Caco-2 (cell line): ENCODE measurements at regions of chr6 and their contacts with region 1.

Region 1: DNA sequence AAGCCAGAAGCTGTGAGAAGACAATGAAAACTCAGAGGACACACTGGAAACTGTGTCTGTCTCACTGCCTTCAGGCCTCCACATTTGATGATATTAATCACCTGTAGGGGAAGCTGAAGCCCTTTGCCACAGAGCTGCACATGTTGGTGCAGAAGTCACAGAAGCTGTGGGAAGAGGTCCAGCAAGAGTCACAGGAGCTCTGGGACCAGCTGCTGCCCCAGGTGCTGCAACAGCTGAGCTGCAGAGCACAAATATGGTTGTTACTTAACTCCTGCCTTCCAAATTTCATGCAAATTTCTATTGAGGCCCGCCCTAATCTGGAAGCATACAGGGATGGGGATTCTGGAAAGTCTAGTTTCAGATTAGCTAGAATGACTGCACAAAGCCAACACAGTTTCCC is 169.3 kb downstream of the OGFRL1 start:
- DNase-seq: peak in 1 of 2 experiments; percentile 4
- H3K4me3 ChIP-seq: no peak overlapping the region
- H3K4me3 Mint-ChIP-seq: no peak overlapping the region
- H3K27ac Mint-ChIP-seq: no peak overlapping the region
- H3K4me1 ChIP-seq: no peaks in the 10 kb centered on the region
- H3K4me1 Mint-ChIP-seq: no peaks in the 10 kb centered on the region
- H3K27me3 ChIP-seq: no peaks in the 10 kb centered on the region
- H3K27me3 Mint-ChIP-seq: no peaks in the 10 kb centered on the region
- CTCF ChIP-seq: no peak

Region 2: DNA sequence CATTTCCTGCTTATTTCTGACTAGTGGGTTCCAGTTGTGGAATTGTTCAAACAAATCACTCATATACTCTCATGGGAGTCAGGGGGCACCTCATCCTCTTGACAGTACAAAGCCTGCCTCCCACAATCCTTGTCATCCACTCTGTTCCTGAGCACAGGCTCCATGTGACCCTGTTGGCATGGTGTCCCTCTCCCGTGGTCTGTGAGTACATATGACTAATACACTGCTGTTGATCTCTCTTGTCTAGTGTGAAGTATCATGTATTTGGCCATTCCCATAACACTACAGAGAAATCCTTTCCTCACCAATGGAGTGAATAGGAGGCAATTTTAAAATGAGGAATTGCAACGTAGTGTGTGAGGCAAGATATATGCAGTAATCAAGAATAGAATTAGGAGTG is 16.0 kb after region 1 on chr6:
- CTCF ChIA-PET with region 1: no interaction called
- POLR2A ChIA-PET with region 1: no interaction called
- intact Hi-C with region 1: no loop called
- DNase-seq: no peak
- H3K4me3 ChIP-seq: no peak overlapping the region
- H3K4me3 Mint-ChIP-seq: no peak overlapping the region
- H3K27ac Mint-ChIP-seq: no peak overlapping the region
- H3K4me1 ChIP-seq: peaks cover 7% of the 10 kb centered on the region
- H3K4me1 Mint-ChIP-seq: peaks cover 12% of the 10 kb centered on the region
- H3K27me3 ChIP-seq: no peaks in the 10 kb centered on the region
- H3K27me3 Mint-ChIP-seq: no peaks in the 10 kb centered on the region
- CTCF ChIP-seq: no peak

Region 3: GRCh38 chr6:71510057-71510713 is 52.3 kb after region 1 on chr6:
- CTCF ChIA-PET with region 1: interaction called, 4 read pairs
- POLR2A ChIA-PET with region 1: no interaction called
- intact Hi-C with region 1: loop called (anchors 10 kb)
- DNase-seq: peak; percentile 54 to 69
- H3K4me3 ChIP-seq: no peak overlapping the region
- H3K4me3 Mint-ChIP-seq: no peak overlapping the region
- H3K27ac Mint-ChIP-seq: peak overlapping the region; percentile 50
- H3K4me1 ChIP-seq: 0 out of 2 replicates have a peak, but pooled peaks cover 3% of the 10 kb centered on the region
- H3K4me1 Mint-ChIP-seq: peaks cover 7% of the 10 kb centered on the region
- H3K27me3 ChIP-seq: no peaks in the 10 kb centered on the region
- H3K27me3 Mint-ChIP-seq: no peaks in the 10 kb centered on the region
- CTCF ChIP-seq: peak; percentile 59 to 68